ENCODE measurements at regions of chr1 and their contacts with region 1.

Region 1: GRCh38 chr1:221203224-221204054 is 324.2 kb downstream of the HLX start:
- DNase-seq: peak; percentile 20 to 86
- H3K4me3 ChIP-seq: no peak overlapping the region
- H3K27ac ChIP-seq: peak overlapping the region; percentile 31 to 45
- H3K4me1 ChIP-seq: peaks cover 0 to 4% of the 10 kb centered on the region in 2 donors
- H3K27me3 ChIP-seq: no peaks in the 10 kb centered on the region
- CTCF ChIP-seq: peak; percentile 38 to 87 (median 74)

Region 2: DNA sequence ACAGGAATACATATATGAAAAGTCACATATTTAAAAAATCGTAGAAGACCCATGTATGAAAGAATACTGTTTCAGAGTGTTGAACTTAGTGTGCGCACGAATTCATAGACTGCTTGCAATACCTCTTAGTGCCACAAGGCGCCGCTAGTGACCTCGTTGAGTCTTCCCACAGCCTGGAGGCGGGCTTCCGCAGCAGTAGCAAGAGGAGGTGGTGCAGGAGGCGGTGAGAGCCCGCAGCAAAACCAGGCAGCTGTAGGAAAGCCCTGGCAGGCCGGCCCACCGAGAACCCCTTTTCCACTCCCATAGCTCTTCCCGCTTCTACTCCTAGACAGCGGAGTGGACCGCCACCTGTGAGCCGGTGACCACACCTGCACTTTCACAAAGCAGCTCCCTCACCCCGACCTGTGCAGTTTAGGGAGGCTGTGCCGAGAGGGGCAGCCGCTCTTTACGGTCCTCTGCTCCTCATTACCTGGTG is 393.2 kb before region 1 on chr1:
- intact Hi-C with region 1: loop called (anchors 1 kb)
- DNase-seq: peak in 1 of 2 donors; percentile 89
- H3K4me3 ChIP-seq: peak overlapping the region; percentile 8 to 36
- H3K27ac ChIP-seq: no peak overlapping the region
- H3K4me1 ChIP-seq: peaks cover 0 to 6% of the 10 kb centered on the region in 2 donors
- H3K27me3 ChIP-seq: no peaks in the 10 kb centered on the region
- CTCF ChIP-seq: peak; percentile 85 to 92 (median 90)

Region 3: GRCh38 chr1:220873868-220874655 is 329.4 kb before region 1 on chr1:
- intact Hi-C with region 1: loop called (anchors 2 kb)
- DNase-seq: peak in 1 of 2 donors; percentile 69
- H3K4me3 ChIP-seq: no peak overlapping the region
- H3K27ac ChIP-seq: no peak overlapping the region
- H3K4me1 ChIP-seq: peaks cover 0 to 7% of the 10 kb centered on the region in 2 donors
- H3K27me3 ChIP-seq: no peaks in the 10 kb centered on the region
- CTCF ChIP-seq: peak; percentile 58 to 74 (median 60)

Region 4: DNA sequence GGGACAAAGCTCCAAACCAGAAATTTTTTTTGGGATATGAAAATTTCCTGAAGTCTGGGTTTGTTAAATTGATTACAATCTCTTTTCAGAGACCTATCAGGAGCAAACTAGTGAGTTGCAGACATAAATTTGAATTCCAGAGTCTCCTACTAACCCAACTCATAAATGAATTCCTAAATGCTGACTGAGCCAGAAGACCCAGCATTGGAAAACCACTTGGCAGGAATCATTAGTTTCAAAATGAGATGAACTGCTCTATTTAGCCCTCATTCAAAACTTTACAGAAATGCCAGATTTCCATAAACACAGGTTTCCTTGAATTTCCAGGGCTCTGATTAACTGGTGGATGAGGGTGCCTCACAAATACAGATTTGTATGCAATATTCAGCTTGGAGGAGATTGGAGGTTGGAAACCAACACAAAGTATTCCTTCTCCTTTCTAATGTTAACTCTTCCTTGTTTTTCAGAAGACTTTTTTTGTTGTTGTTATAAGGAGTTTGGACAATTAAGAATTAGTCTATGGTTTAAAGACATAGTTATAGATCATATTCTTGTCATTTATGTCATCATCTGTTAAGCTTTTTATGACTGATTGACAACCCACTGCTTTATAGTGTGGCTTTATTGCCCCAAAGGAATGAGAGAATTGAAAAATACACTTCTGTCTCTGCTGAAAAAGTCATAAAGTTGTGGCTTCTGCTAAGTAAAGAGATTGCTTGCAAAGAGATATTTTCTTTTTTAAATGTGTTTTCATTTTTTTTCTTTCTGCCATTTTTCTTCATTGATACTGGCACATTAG is 101.4 kb before region 1 on chr1:
- intact Hi-C with region 1: no loop called
- DNase-seq: no peak
- H3K4me3 ChIP-seq: no peak overlapping the region
- H3K27ac ChIP-seq: no peak overlapping the region
- H3K4me1 ChIP-seq: no peaks in the 10 kb centered on the region
- H3K27me3 ChIP-seq: no peaks in the 10 kb centered on the region
- CTCF ChIP-seq: no peak

Region 5: DNA sequence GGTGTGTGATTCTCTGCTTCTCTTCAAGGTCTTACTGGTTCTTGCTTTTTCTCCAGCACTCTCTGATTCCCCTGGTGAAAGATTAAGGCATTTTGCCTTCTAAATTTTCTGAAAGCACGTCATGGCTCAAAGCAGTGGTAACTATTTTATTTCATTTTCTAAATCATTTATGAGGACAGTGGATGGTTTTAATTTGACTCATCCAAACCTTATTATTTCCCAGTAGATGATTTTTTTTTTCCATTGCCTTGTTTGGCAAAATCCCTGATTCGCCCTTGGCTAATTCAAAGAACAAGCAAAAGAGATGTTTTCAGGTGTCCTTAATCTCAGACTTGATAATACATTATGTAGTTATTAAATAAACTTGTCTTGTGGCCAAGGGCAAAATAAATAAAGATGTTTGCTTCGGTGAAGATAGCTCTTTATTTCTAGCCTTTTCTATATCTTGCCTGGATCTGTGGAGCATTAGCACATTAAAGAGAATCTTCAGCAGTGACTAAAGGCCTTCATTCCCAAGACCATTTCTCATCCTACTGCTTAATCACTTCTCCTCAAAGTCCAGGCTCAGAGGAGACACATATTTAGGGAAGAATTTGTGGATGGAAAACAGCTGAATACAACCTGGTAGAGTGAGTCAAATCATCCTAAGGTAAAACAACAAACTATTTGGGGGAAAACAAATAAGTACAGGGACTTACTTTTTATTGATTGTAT is 178.6 kb after region 1 on chr1:
- intact Hi-C with region 1: no loop called
- DNase-seq: no peak
- H3K4me3 ChIP-seq: no peak overlapping the region
- H3K27ac ChIP-seq: no peak overlapping the region
- H3K4me1 ChIP-seq: no peaks in the 10 kb centered on the region
- H3K27me3 ChIP-seq: no peaks in the 10 kb centered on the region
- CTCF ChIP-seq: no peak

Region 6: GRCh38 chr1:221478050-221478949 is 274.9 kb after region 1 on chr1:
- intact Hi-C with region 1: no loop called
- DNase-seq: peak in 1 of 2 donors; percentile 64
- H3K4me3 ChIP-seq: no peak overlapping the region
- H3K27ac ChIP-seq: no peak overlapping the region
- H3K4me1 ChIP-seq: no peaks in the 10 kb centered on the region
- H3K27me3 ChIP-seq: no peaks in the 10 kb centered on the region
- CTCF ChIP-seq: peak in 2 of 3 experiments; percentile 16 to 50

Region 7: DNA sequence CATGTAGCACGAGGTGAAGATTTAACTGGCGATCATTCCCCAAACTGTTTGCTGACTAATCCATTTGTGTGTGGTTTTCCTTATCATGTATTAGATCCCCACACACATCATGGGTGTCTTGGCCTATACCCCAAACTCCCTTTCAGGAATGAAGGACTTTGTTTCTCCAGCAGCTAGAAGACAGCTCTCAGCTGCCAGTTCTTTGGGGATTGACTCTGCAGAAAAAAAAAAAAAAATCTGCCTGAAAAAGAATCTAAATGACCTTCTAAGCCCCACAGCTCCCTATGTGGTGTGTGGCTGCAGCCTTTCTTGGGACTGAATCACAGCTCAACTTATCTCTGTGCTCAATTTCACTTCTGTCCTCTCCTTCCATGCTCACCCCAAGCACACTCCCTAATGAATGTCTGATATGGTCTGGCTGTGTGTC is 794.8 kb after region 1 on chr1:
- intact Hi-C with region 1: no loop called
- DNase-seq: no peak
- H3K4me3 ChIP-seq: no peak overlapping the region
- H3K27ac ChIP-seq: no peak overlapping the region
- H3K4me1 ChIP-seq: no peaks in the 10 kb centered on the region
- H3K27me3 ChIP-seq: no peaks in the 10 kb centered on the region
- CTCF ChIP-seq: no peak

Measured in ascending aorta (tissue), 2 donors.